CD8-positive, alpha-beta T cell (primary cell): ENCODE measurements at regions of chr4 and their contacts with region 1.

Region 1: GRCh38 chr4:170047771-170048354 is 21.7 kb upstream of the MFAP3L start:
- DNase-seq: peak in 8 of 9 experiments; percentile 16 to 74 (median 58)
- ATAC-seq: no peak
- H3K4me3 ChIP-seq: no peak overlapping the region
- H3K4me3 Mint-ChIP-seq: no peak overlapping the region
- H3K27ac ChIP-seq: no peak overlapping the region
- H3K27ac Mint-ChIP-seq: no peak overlapping the region
- H3K4me1 ChIP-seq: no peaks in the 10 kb centered on the region
- H3K4me1 Mint-ChIP-seq: no peaks in the 10 kb centered on the region
- H3K27me3 ChIP-seq: no peaks in the 10 kb centered on the region
- H3K27me3 Mint-ChIP-seq: peaks cover 3% of the 10 kb centered on the region
- CTCF ChIP-seq: peak; percentile 88

Region 2: DNA sequence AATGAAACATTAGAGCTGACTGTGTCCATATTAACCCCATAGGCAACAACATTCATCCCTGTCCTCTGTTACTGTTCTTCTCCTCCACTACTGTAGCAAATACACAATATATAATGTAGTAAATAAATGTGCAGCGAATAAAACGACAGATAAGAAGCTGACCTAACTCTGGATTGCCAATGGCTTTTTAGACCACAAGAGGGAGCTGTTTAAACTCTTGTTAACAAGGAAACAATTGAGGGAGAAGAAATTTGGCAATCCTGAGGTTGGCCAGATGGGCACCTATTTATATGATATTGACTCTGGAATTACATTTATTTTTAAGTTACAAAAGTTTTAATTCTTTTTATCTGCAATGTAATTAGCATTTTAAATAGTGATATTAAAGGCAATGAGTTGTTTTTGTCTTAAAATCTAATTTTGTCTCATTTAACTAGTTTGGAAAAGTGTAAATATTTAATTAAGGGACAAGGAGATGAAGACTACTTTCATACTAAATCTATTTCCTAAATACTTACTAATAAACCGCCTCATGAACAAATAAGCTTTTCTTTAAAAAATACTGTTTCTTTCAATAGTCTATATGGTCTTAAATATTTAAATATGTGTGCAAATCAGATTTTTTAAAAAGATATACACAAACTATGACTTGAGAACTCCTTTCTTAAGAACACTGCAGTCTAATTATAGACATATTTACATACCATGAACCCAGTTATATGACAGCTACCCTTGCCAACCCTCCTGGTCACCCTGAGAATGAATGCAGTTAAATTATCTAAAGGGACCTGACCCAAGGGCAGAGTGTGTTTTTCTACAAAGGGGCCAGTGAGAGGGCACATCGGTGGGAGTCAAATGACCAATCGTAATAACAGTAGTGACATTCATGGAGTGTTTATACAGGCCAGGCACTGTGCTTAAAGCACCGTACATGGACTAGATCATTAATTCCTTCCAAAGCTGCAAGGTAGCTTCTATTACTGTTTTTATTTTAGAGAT is 237.2 kb before region 1 on chr4:
- CTCF ChIA-PET with region 1: interaction called, 44 read pairs
- POLR2A ChIA-PET with region 1: interaction called, 3 read pairs
- intact Hi-C with region 1: loop called in 1 of 2 experiments (anchors 1 kb)
- DNase-seq: peak in 3 of 9 experiments; percentile 18 to 68 (median 61)
- ATAC-seq: no peak
- H3K4me3 ChIP-seq: no peak overlapping the region
- H3K4me3 Mint-ChIP-seq: no peak overlapping the region
- H3K27ac ChIP-seq: no peak overlapping the region
- H3K27ac Mint-ChIP-seq: no peak overlapping the region
- H3K4me1 ChIP-seq: no peaks in the 10 kb centered on the region
- H3K4me1 Mint-ChIP-seq: no peaks in the 10 kb centered on the region
- H3K27me3 ChIP-seq: no peaks in the 10 kb centered on the region
- H3K27me3 Mint-ChIP-seq: peaks cover 6% of the 10 kb centered on the region
- CTCF ChIP-seq: peak; percentile 79